A673 (cell line): ENCODE measurements at regions of chr6 and their contacts with region 1.

Region 1: DNA sequence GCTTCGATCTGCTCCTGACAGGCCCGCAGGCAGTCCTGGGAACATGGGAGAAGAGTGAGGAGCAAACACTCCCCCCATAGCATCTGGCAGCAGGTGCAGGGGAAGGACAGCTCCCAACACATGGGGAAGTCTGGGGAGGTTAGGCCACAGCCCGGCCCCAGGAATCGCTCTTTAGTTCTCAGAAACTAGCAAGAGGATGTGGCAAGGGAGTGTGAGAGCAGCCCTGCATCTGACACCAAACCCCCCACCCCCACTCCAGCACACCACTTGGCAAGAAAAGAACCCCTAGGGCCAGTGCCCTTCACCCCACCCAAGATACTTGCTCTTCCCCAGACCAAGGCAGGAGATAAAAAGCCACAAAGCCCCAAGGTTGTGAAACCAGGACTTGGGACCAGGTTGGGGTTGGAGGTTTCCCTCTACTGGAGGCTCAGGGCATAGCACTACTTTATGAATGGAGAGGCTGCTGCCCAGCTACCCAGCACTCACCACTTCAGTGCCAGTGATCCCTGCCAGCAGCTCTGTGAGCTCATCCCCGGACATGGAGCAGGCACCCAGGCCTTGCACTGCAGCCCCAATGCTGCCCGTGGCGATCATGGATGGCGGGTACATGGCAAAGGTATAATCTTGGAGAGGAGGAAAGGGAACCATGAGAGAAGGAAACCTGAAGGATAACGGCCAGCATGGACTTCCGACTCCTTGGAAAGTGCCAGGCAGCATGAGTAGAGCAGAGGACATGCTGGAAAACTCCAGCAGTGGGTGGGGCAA is 5.4 kb downstream of the CCND3 start:
- DNase-seq: peak; percentile 80
- H3K4me3 ChIP-seq: no peak overlapping the region
- H3K27ac ChIP-seq: peak overlapping the region; percentile 22
- H3K4me1 ChIP-seq: peaks cover 27% of the 10 kb centered on the region
- H3K27me3 ChIP-seq: no peaks in the 10 kb centered on the region
- CTCF ChIP-seq: peak; percentile 80

Region 2: GRCh38 chr6:41787219-41787917 is 148.9 kb before region 1 on chr6 and contains the start of gene TOMM6:
- CTCF ChIA-PET with region 1: no interaction called
- POLR2A ChIA-PET with region 1: no interaction called
- intact Hi-C with region 1: loop called (anchors 5 kb)
- DNase-seq: peak; percentile 95
- H3K4me3 ChIP-seq: peak within 1 kb of the TSS; percentile 86
- H3K27ac ChIP-seq: peak within 1 kb of the TSS; percentile 86
- H3K4me1 ChIP-seq: peaks cover 5% of the 10 kb centered on the region
- H3K27me3 ChIP-seq: no peaks in the 10 kb centered on the region
- CTCF ChIP-seq: no peak; the same call in none of the 2 replicates
- total RNA-seq, gene TOMM6: 197 and 206 TPM in 2 replicates